ENCODE measurements at regions of chr3 and their contacts with region 1.

Region 1: DNA sequence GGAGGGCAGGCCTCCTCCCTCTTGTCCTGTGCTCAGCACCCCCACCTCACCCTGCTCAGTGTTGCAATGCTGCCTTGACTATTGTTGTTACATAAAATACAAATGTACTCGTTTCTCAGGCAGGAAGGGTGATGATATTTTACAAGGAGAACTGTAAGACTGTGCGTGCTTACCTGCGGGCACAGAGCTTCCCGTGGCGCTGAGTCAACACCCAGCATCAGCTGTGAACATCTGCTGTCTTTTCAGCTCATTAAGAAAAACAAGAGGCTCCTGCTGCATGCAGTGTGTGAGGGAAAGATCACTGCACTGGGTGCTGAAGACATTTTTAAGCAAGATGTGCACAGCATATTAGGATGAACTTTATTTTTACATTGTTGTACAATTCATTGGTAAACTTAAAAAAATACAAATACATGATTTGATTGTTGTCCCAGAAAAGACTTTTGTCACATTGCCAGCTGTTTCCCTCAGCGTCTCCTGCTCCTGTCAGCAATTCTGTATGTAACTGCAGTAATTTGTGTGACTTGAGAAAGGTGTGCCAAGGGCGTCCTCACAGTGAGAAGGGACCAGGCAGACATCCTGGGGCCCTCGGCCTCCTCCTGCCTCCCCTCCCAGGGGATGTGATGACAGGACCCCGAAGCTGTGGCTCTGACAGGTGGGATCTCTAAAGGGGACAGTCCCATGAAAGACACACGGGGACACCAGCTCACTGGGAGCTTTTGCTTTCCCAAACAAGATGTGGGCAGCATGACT is 56.3 kb upstream of the RPL32 start:
- DNase-seq: peak; percentile 35
- H3K4me3 ChIP-seq: no peak overlapping the region
- H3K27me3 ChIP-seq: no peaks in the 10 kb centered on the region
- CTCF ChIP-seq: no peak

Region 2: GRCh38 chr3:12611117-12611516 is 286.6 kb before region 1 on chr3:
- CTCF ChIA-PET with region 1: no interaction called
- POLR2A ChIA-PET with region 1: interaction called, 24 read pairs
- DNase-seq: no peak
- H3K4me3 ChIP-seq: no peak overlapping the region
- H3K27me3 ChIP-seq: no peaks in the 10 kb centered on the region
- CTCF ChIP-seq: no peak

Region 3: DNA sequence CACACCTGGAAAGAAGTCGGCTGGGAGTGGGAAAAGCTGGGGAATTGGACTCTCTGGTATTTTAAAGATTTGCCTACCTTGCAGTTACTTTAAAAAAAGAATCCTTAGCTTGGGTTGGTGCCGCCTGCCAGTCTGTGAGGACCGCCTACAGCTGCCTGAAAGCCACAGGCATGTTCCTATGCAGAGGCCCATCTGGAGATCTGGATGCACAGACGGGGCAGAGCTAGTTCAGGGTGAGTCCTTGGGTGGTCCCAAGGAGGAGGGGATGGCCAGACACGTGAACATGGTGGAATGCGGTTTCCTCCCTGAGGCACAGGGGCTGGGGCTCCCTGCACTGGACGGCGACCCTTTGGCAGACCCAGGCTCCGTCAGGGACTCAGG is 288.7 kb after region 1 on chr3:
- CTCF ChIA-PET with region 1: no interaction called
- POLR2A ChIA-PET with region 1: no interaction called
- DNase-seq: no peak
- H3K4me3 ChIP-seq: no peak overlapping the region
- H3K27me3 ChIP-seq: peaks cover 4% of the 10 kb centered on the region; the same call in 1 of the 2 replicates
- CTCF ChIP-seq: no peak